ENCODE measurements at regions of chr2 and their contacts with region 1.

Region 1: GRCh38 chr2:98444436-98445176 is at the start of gene INPP4A:
- DNase-seq: peak; percentile 67 to 86 (median 82)
- H3K4me3 ChIP-seq: peak within 1 kb of the TSS; percentile 62
- H3K27ac ChIP-seq: peak within 1 kb of the TSS; percentile 28 to 42
- H3K4me1 ChIP-seq: peaks cover 10% of the 10 kb centered on the region
- H3K27me3 ChIP-seq: no peaks in the 10 kb centered on the region
- CTCF ChIP-seq: peak in 1 of 3 donors; percentile 28
- EP300 ChIP-seq: no peak
- POLR2A ChIP-seq: no peak
- total RNA-seq, gene INPP4A: 13.1 to 25.8 (median 18.6) TPM

Region 2: GRCh38 chr2:98012561-98012991 is 432.0 kb before region 1 on chr2:
- intact Hi-C with region 1: loop called in 1 of 4 experiments (anchors 5 kb)
- DNase-seq: no peak
- H3K4me3 ChIP-seq: no peak overlapping the region
- H3K27ac ChIP-seq: no peak overlapping the region
- H3K4me1 ChIP-seq: peaks cover 7% of the 10 kb centered on the region
- H3K27me3 ChIP-seq: no peaks in the 10 kb centered on the region
- CTCF ChIP-seq: no peak
- EP300 ChIP-seq: no peak
- POLR2A ChIP-seq: no peak

Region 3: GRCh38 chr2:98269274-98269673 is 175.3 kb before region 1 on chr2:
- intact Hi-C with region 1: no loop called
- DNase-seq: no peak
- H3K4me3 ChIP-seq: no peak overlapping the region
- H3K27ac ChIP-seq: peak overlapping the region in 1 of 2 donors; percentile 9
- H3K4me1 ChIP-seq: peaks cover 7% of the 10 kb centered on the region
- H3K27me3 ChIP-seq: no peaks in the 10 kb centered on the region
- CTCF ChIP-seq: no peak
- EP300 ChIP-seq: no peak
- POLR2A ChIP-seq: no peak

Measured in ovary (tissue), 10 donors.